ENCODE measurements at regions of chr1 and their contacts with region 1.

Region 1: DNA sequence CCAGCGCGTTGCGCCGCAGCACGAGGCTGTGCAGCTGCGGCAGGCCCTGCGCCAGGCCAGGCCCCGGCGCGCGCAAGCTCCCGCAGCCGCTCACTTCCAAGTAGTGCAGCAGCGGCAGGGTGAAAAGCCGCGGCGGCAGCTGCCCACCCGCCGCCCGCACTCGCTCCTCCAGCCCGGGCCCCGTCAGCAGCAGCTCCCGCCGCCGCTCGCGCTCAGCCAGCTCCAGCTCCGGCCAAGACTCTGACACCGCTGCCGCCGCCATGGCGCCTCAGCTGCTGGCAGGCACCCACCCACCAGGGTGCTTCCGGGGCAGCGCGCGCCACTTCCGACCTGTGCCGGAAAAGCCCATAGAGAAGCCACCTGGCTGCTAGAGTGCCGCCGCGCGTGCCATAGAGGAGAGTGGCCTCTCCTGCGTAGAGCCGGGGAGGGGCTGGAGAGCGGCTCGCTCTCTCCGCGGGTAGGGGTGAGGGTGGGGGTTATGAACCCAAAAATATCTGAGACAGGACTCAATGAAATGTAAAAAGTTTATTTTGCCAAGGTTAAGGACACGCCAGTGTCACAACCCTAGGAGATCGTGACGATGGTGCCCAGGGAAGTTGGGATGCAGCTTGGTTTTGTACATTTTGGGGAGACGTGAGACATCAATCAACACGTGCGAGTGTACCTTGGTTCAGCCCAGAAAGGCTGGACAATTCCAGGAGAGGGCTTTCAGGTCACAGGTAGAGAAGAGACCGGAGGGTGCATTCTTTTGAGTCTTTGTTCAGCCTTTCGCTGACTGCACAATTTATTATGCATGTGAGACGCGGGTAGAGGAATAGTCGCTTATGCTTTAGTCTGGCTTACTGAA is at the start of gene LRRC47:
- DNase-seq: peak; percentile 92
- ATAC-seq: peak; percentile 99
- H3K4me3 ChIP-seq: peak within 1 kb of the TSS; percentile 50 to 91 (median 79)
- H3K4me3 Mint-ChIP-seq: peak within 1 kb of the TSS; percentile 97
- H3K27ac ChIP-seq: peak within 1 kb of the TSS; percentile 58 to 68
- H3K27ac Mint-ChIP-seq: peak within 1 kb of the TSS; percentile 94
- H3K4me1 ChIP-seq: peaks cover 15 to 31% of the 10 kb centered on the region in 2 donors
- H3K4me1 Mint-ChIP-seq: peaks cover 38% of the 10 kb centered on the region
- H3K27me3 ChIP-seq: peaks cover 0 to 10% (median 0%) of the 10 kb centered on the region in 4 experiments
- H3K27me3 Mint-ChIP-seq: peaks cover 10% of the 10 kb centered on the region
- CTCF ChIP-seq: no peak
- total RNA-seq, gene LRRC47: 48.2 and 49.7 TPM in 2 replicates

Region 2: DNA sequence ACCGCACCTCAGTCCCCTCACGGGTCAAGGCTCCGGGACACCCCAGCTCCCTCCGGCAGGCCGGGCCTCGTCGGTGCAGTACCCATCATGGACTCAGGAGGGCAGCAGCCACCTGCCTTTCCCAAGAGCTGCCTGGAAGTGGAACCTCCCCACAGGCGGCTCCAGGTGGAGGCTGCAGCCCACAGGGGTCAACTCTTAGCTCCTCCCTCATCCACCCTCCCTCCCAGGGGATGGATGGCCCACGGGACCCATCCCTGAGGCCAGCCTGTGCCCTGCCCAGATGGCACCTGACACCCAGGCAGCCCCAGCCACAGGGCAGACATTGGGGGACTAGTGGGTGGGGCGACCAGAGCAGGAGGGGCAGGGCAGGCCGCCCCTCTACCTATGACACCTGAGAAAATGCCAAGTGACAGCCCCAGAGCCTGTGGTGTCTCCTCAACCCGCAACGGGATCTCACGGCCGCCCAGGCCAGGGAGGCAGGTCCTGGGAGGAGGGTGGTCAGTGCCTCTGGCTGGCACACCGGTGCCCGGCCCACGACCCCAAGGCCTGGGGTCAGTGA is 343.2 kb before region 1 on chr1:
- CTCF ChIA-PET with region 1: interaction called, 15 read pairs
- POLR2A ChIA-PET with region 1: no interaction called
- intact Hi-C with region 1: loop called (anchors 5 kb)
- DNase-seq: peak; percentile 82
- ATAC-seq: peak; percentile 84
- H3K4me3 ChIP-seq: no peak overlapping the region
- H3K4me3 Mint-ChIP-seq: peak overlapping the region; percentile 71
- H3K27ac ChIP-seq: no peak overlapping the region
- H3K27ac Mint-ChIP-seq: no peak overlapping the region
- H3K4me1 ChIP-seq: peaks cover 16 to 20% of the 10 kb centered on the region in 2 donors
- H3K4me1 Mint-ChIP-seq: peaks cover 3% of the 10 kb centered on the region
- H3K27me3 ChIP-seq: peaks cover 0 to 44% (median 21%) of the 10 kb centered on the region in 4 experiments
- H3K27me3 Mint-ChIP-seq: peaks cover 26% of the 10 kb centered on the region
- CTCF ChIP-seq: peak; percentile 92

Region 3: GRCh38 chr1:3683992-3684391 is 112.4 kb before region 1 on chr1:
- CTCF ChIA-PET with region 1: no interaction called
- POLR2A ChIA-PET with region 1: no interaction called
- intact Hi-C with region 1: no loop called
- DNase-seq: no peak
- ATAC-seq: no peak
- H3K4me3 ChIP-seq: no peak overlapping the region
- H3K4me3 Mint-ChIP-seq: no peak overlapping the region
- H3K27ac ChIP-seq: no peak overlapping the region
- H3K27ac Mint-ChIP-seq: no peak overlapping the region
- H3K4me1 ChIP-seq: peaks cover 5 to 24% of the 10 kb centered on the region in 2 donors
- H3K4me1 Mint-ChIP-seq: peaks cover 28% of the 10 kb centered on the region
- H3K27me3 ChIP-seq: peaks cover 0 to 2% (median 0%) of the 10 kb centered on the region in 4 experiments
- H3K27me3 Mint-ChIP-seq: peaks cover 6% of the 10 kb centered on the region
- CTCF ChIP-seq: no peak

Region 4: GRCh38 chr1:3746830-3747521 is 49.5 kb before region 1 on chr1:
- CTCF ChIA-PET with region 1: interaction called, 4 read pairs
- POLR2A ChIA-PET with region 1: no interaction called
- intact Hi-C with region 1: loop called (anchors 1 kb)
- DNase-seq: peak; percentile 84
- ATAC-seq: peak; percentile 99
- H3K4me3 ChIP-seq: peak overlapping the region; percentile 34 to 74 (median 71)
- H3K4me3 Mint-ChIP-seq: peak overlapping the region; percentile 90
- H3K27ac ChIP-seq: peak overlapping the region in 1 of 2 donors; percentile 72
- H3K27ac Mint-ChIP-seq: peak overlapping the region; percentile 78
- H3K4me1 ChIP-seq: peaks cover 9 to 18% of the 10 kb centered on the region in 2 donors
- H3K4me1 Mint-ChIP-seq: peaks cover 27% of the 10 kb centered on the region
- H3K27me3 ChIP-seq: peaks cover 0 to under 1% (median 0%) of the 10 kb centered on the region in 4 experiments
- H3K27me3 Mint-ChIP-seq: peaks cover 5% of the 10 kb centered on the region
- CTCF ChIP-seq: no peak

Region 5: GRCh38 chr1:3772027-3772714 is 24.3 kb before region 1 on chr1:
- CTCF ChIA-PET with region 1: interaction called, 14 read pairs
- POLR2A ChIA-PET with region 1: interaction called, 5 read pairs
- intact Hi-C with region 1: loop called (anchors 1 kb)
- DNase-seq: peak; percentile 91
- ATAC-seq: peak; percentile 89
- H3K4me3 ChIP-seq: peak overlapping the region in 4 of 5 experiments; percentile 53 to 75 (median 68)
- H3K4me3 Mint-ChIP-seq: peak overlapping the region; percentile 84
- H3K27ac ChIP-seq: peak overlapping the region; percentile 33 to 55
- H3K27ac Mint-ChIP-seq: no peak overlapping the region
- H3K4me1 ChIP-seq: peaks cover 19 to 33% of the 10 kb centered on the region in 2 donors
- H3K4me1 Mint-ChIP-seq: peaks cover 23% of the 10 kb centered on the region
- H3K27me3 ChIP-seq: no peaks in the 10 kb centered on the region
- H3K27me3 Mint-ChIP-seq: peaks cover 6% of the 10 kb centered on the region
- CTCF ChIP-seq: no peak

Region 6: DNA sequence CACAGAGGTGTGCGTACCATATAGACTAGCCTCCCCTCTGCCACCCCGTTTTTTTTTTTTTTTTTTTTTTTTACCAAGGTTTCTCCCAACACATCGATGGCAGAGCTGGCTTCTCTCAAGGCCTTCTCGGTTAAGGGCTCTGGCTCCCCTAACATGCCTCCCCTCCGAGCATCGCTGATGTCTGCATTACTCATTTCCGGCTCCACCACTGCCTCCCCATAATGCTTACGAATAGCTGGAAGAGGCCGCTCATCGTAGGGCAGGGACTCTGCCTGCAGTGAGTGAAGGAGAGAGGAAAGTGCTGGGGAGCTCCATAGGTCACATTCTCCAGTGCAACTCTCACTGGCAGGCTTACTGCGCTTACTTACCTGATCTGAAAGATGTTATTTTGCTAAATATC is 40.0 kb after region 1 on chr1:
- CTCF ChIA-PET with region 1: no interaction called
- POLR2A ChIA-PET with region 1: no interaction called
- intact Hi-C with region 1: no loop called
- DNase-seq: no peak
- ATAC-seq: no peak
- H3K4me3 ChIP-seq: no peak overlapping the region
- H3K4me3 Mint-ChIP-seq: no peak overlapping the region
- H3K27ac ChIP-seq: no peak overlapping the region
- H3K27ac Mint-ChIP-seq: no peak overlapping the region
- H3K4me1 ChIP-seq: peaks cover 0 to 6% of the 10 kb centered on the region in 2 donors
- H3K4me1 Mint-ChIP-seq: peaks cover 14% of the 10 kb centered on the region
- H3K27me3 ChIP-seq: no peaks in the 10 kb centered on the region
- H3K27me3 Mint-ChIP-seq: no peaks in the 10 kb centered on the region
- CTCF ChIP-seq: no peak

Region 7: DNA sequence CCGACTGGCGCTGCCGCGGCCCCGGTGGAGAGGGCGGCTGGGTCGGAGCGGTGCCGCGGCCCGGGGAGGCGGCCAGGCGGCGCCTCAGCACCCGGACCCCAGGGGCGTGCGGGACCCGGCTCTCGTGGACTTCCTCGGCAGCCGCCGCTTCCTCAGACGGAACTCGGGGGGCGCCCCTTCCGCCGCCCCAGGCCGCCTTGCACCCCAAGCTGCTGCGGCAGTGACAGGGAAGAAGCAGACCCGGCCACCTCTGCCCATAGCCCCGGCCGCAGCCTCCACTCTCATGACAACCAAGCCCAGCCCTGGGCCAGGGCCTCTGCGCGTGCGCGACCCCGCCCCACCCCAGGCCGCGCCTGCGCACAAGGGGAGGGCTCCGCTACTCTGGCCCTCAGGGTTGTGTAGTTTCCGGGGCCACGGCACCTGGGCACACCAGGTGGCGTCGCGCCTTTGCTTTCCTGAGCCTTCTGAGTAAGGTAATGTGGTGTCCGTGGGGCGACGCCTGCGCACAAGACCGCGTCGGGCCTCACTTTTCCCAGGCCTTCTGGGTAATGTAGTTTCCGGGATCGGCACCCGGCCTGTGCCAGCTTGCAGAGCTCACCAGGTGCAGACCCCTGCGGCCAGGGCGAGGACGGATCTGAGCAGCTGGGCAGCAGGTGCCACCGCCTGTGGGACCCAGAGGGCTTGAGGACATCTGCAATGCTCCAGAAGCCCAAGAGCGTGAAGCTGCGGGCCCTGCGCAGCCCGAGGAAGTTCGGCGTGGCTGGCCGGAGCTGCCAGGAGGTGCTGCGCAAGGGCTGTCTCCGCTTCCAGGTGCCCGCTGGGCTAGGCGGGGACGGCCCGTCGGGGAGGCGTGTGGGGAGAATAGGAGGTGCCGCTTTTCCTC is 60.7 kb after region 1 on chr1 and contains the starts of genes CEP104 and DFFB:
- CTCF ChIA-PET with region 1: interaction called, 3 read pairs
- POLR2A ChIA-PET with region 1: no interaction called
- intact Hi-C with region 1: loop called (anchors 1 kb)
- DNase-seq: peak; percentile 99
- ATAC-seq: peak; percentile 97
- H3K4me3 ChIP-seq: peak within 1 kb of the TSS; percentile 59 to 92 (median 85)
- H3K4me3 Mint-ChIP-seq: peak within 1 kb of the TSS; percentile 98
- H3K27ac ChIP-seq: peak within 1 kb of the TSS; percentile 59 to 68
- H3K27ac Mint-ChIP-seq: peak within 1 kb of the TSS; percentile 93
- H3K4me1 ChIP-seq: peaks cover 20 to 24% of the 10 kb centered on the region in 2 donors
- H3K4me1 Mint-ChIP-seq: peaks cover 31% of the 10 kb centered on the region
- H3K27me3 ChIP-seq: no peaks in the 10 kb centered on the region
- H3K27me3 Mint-ChIP-seq: no peaks in the 10 kb centered on the region
- CTCF ChIP-seq: peak; percentile 46
- total RNA-seq, gene CEP104: 71.8 and 76.2 TPM in 2 replicates
- total RNA-seq, gene DFFB: 17.4 and 20.7 TPM in 2 replicates

Region 8: DNA sequence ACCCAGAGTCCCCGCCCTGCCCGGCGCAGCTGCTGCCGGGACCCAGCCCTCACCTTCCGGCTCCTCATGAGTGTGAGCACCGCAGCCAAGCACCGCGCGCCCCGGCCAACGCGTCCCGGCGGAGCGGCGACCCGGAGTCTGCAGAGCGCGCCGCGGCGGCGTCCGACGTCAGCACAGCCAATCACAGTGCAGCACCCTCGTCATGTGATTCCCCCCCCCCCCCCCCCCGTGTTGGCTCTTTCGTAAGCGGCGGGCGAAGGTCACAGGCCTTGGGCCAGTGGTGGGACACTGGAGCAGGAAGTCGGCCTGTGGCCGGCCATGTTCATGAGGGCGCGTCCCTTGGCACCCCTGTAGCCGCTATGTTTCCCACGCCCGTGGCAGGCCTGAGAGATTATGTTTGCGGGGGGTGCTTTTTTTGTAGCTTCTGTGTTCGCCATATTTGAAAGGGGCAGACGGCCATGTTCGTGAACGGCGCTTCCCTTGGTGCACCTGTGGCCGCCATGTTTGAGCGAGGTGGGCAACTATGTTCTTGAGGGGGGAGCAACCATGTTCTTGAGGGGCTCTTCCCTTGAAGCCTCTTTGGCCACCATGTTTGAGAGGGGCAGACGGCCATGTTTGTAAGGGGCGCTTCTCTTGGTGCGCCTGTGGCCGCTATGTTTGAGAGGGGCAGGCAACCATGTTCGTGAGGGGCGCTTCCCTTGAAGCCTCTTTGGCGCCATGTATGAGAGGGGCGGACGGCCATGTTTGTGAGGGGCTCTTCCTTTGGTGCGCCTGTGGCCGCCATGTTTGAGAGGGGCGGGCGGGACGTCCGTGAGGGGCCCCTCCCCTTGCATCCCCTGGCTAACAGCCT is 103.9 kb after region 1 on chr1 and contains the start of gene C1orf174:
- CTCF ChIA-PET with region 1: no interaction called
- POLR2A ChIA-PET with region 1: interaction called, 11 read pairs
- intact Hi-C with region 1: loop called (anchors 1 kb)
- DNase-seq: peak; percentile 99
- ATAC-seq: peak; percentile 76
- H3K4me3 ChIP-seq: peak within 1 kb of the TSS; percentile 59 to 98 (median 84)
- H3K4me3 Mint-ChIP-seq: peak within 1 kb of the TSS; percentile 93
- H3K27ac ChIP-seq: peak within 1 kb of the TSS; percentile 84 to 95
- H3K27ac Mint-ChIP-seq: peak within 1 kb of the TSS; percentile 96
- H3K4me1 ChIP-seq: peaks cover 10 to 25% of the 10 kb centered on the region in 2 donors
- H3K4me1 Mint-ChIP-seq: peaks cover 28% of the 10 kb centered on the region
- H3K27me3 ChIP-seq: no peaks in the 10 kb centered on the region
- H3K27me3 Mint-ChIP-seq: no peaks in the 10 kb centered on the region
- CTCF ChIP-seq: no peak
- total RNA-seq, gene C1orf174: 33.2 and 35.7 TPM in 2 replicates